Activated CD4-positive, alpha-beta memory T cell treated with anti-CD3 and anti-CD28 coated beads, Interleukin-2, amount 10 ng/mL, durations not matched to agents 7 days and 5 days (primary cell): ENCODE measurements at regions of chr1 and their contacts with region 1.

Region 1: GRCh38 chr1:113904674-113905434 is at the starts of genes AP4B1 and DCLRE1B:
- DNase-seq: peak; percentile 99
- H3K4me3 Mint-ChIP-seq: peak within 1 kb of the TSS; percentile 93
- H3K27ac Mint-ChIP-seq: peak within 1 kb of the TSS; percentile 89
- H3K4me1 Mint-ChIP-seq: peaks cover 62% of the 10 kb centered on the region
- H3K27me3 Mint-ChIP-seq: no peaks in the 10 kb centered on the region
- total RNA-seq, gene AP4B1: 53.7 to 56.7 TPM
- total RNA-seq, gene DCLRE1B: 13.2 to 14.4 TPM

Region 2: GRCh38 chr1:113811888-113812660 is 92.8 kb before region 1 on chr1 and contains the start of gene RSBN1:
- CTCF ChIA-PET with region 1: interaction called, 5 read pairs
- POLR2A ChIA-PET with region 1: interaction called, 29 read pairs
- DNase-seq: peak; percentile 99
- H3K4me3 Mint-ChIP-seq: peak within 1 kb of the TSS; percentile 98
- H3K27ac Mint-ChIP-seq: peak within 1 kb of the TSS; percentile 92
- H3K4me1 Mint-ChIP-seq: peaks cover 36% of the 10 kb centered on the region
- H3K27me3 Mint-ChIP-seq: no peaks in the 10 kb centered on the region
- total RNA-seq, gene RSBN1: 27.9 to 32.1 TPM

Region 3: DNA sequence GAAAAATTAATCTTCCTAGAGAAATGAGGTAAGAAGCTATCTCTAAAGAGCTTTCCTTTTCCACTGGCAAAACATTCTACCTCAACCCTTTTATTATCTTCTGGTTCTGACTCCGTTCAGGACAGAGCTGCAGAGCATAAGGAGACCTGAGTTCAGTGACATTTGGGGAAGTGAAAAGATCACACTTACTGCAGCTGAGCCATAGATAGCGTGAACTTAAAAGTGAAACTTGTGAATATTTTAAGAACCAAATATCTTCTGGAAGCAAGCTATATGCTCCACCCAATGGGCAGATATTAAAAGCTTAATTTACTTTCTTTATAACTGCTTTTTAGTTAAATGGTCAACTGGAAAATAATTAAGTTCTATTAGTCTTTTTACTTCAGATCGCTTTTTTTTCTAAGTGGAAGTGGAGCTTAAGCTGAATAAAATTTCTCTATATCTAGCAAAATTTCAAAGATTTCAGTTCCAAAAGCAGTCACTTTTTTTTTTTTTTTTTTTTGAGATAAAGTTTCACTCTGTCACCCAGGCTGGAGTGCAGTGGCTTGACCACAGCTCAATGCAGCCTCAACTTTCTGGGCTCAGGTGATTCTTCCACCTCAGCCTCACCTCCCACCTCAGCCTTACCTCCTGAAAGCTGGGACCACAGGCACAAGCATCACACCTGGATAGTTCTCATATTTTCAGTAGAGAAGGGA is 45.2 kb before region 1 on chr1:
- CTCF ChIA-PET with region 1: interaction called, 3 read pairs
- POLR2A ChIA-PET with region 1: interaction called, 21 read pairs
- DNase-seq: no peak
- H3K4me3 Mint-ChIP-seq: no peak overlapping the region
- H3K27ac Mint-ChIP-seq: peak overlapping the region; percentile 64
- H3K4me1 Mint-ChIP-seq: peaks cover 50% of the 10 kb centered on the region
- H3K27me3 Mint-ChIP-seq: no peaks in the 10 kb centered on the region

Region 4: GRCh38 chr1:113881661-113882060 is 23.2 kb before region 1 on chr1:
- CTCF ChIA-PET with region 1: interaction called, 4 read pairs
- POLR2A ChIA-PET with region 1: interaction called, 41 read pairs
- DNase-seq: no peak
- H3K4me3 Mint-ChIP-seq: no peak overlapping the region
- H3K27ac Mint-ChIP-seq: no peak overlapping the region
- H3K4me1 Mint-ChIP-seq: peaks cover 51% of the 10 kb centered on the region
- H3K27me3 Mint-ChIP-seq: no peaks in the 10 kb centered on the region

Region 5: DNA sequence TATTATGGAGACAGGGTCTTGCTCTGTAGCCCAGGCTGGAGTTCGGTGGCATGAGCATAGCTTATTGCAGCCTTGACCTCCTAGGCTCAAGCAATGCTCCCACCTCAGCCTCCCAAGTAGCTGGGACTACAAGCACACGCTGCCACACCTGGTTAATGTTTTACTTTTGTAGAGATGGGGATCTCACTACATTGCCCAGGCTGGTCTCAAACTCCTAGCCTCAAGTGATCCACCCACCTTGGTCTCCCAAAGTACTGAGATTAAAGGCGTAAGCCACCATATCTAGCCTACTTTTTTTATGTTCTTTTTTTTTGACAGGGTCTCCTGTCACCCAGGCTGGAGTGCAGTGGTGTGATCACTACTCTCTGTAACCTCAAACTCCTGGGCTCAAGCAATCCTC is 11.6 kb before region 1 on chr1:
- CTCF ChIA-PET with region 1: interaction called, 5 read pairs
- POLR2A ChIA-PET with region 1: interaction called, 18 read pairs
- DNase-seq: no peak
- H3K4me3 Mint-ChIP-seq: no peak overlapping the region
- H3K27ac Mint-ChIP-seq: no peak overlapping the region
- H3K4me1 Mint-ChIP-seq: peaks cover 14% of the 10 kb centered on the region
- H3K27me3 Mint-ChIP-seq: no peaks in the 10 kb centered on the region